OCI-LY7 (cell line): ENCODE measurements at regions of chr14 and their contacts with region 1.

Region 1: DNA sequence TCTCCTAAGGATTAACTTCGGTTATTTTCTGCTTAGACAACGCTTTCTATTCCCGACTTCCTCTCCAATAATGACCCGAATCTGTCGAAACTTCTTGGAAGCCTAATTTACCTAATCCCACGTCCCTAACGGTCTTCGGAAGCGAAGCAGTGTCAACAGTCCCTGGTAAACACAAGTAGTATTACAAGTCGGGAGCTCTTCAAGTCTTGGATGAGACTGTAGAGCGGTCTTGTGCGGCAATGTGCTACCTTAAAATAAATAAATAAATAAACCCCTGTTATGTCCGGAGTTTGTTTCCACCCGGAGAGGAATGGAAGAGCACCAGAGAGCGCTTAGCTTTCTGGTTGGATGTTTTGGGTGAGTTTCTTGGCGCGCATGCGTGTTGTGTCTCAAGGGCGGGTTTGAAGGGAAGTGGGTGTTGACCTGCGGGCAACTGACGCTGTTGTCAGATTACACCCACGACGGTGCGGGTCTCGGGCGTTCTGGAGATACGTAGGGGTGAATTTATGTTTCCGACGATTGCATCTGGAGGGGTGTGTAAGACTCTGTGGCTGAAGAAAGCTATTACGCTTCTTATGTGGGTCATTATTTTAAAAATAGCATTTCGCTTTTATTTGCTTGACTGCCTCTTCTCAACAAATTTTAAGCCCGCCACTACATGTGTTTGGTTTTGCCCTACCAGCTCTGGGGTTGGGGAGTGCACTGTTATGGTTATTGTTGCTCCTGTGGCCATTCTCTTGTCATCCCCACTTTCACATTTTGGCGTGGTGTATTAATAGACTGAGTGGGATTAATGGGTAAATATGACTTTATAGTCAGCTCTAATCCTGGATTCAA is at the starts of genes KIAA0586 and TIMM9:
- DNase-seq: peak; percentile 99
- H3K4me3 ChIP-seq: peak within 1 kb of the TSS; percentile 95
- H3K27ac ChIP-seq: peak within 1 kb of the TSS; percentile 94
- H3K4me1 ChIP-seq: peaks cover 33% of the 10 kb centered on the region
- CTCF ChIP-seq: no peak
- total RNA-seq, gene KIAA0586: 20.5 and 20.8 TPM in 2 replicates
- total RNA-seq, gene TIMM9: 33.0 and 37.2 TPM in 2 replicates

Region 2: GRCh38 chr14:58199726-58200479 is 227.6 kb before region 1 on chr14 and contains the start of gene ACTR10:
- CTCF ChIA-PET with region 1: no interaction called
- POLR2A ChIA-PET with region 1: interaction called, 13 read pairs
- intact Hi-C with region 1: no loop called
- DNase-seq: peak; percentile 91
- H3K4me3 ChIP-seq: peak within 1 kb of the TSS; percentile 95
- H3K27ac ChIP-seq: peak within 1 kb of the TSS; percentile 59
- H3K4me1 ChIP-seq: peaks cover 18% of the 10 kb centered on the region
- CTCF ChIP-seq: no peak
- total RNA-seq, gene ACTR10: 34.3 and 42.5 TPM in 2 replicates

Region 3: GRCh38 chr14:58244556-58245387 is 182.7 kb before region 1 on chr14 and contains the start of gene PSMA3:
- CTCF ChIA-PET with region 1: no interaction called
- POLR2A ChIA-PET with region 1: no interaction called
- intact Hi-C with region 1: loop called (anchors 5 kb)
- DNase-seq: peak; percentile 97
- H3K4me3 ChIP-seq: peak within 1 kb of the TSS; percentile 92
- H3K27ac ChIP-seq: peak within 1 kb of the TSS; percentile 88
- H3K4me1 ChIP-seq: peaks cover 33% of the 10 kb centered on the region
- CTCF ChIP-seq: no peak
- total RNA-seq, gene PSMA3: 88.9 and 89.1 TPM in 2 replicates

Region 4: GRCh38 chr14:58297762-58298476 is 129.6 kb before region 1 on chr14:
- CTCF ChIA-PET with region 1: no interaction called
- POLR2A ChIA-PET with region 1: interaction called, 8 read pairs
- intact Hi-C with region 1: loop called (anchors 1 kb)
- DNase-seq: peak; percentile 99
- H3K4me3 ChIP-seq: peak overlapping the region; percentile 99
- H3K27ac ChIP-seq: peak overlapping the region; percentile 92
- H3K4me1 ChIP-seq: peaks cover 24% of the 10 kb centered on the region
- CTCF ChIP-seq: peak; percentile 41; the same call in 1 of the 2 replicates

Region 5: DNA sequence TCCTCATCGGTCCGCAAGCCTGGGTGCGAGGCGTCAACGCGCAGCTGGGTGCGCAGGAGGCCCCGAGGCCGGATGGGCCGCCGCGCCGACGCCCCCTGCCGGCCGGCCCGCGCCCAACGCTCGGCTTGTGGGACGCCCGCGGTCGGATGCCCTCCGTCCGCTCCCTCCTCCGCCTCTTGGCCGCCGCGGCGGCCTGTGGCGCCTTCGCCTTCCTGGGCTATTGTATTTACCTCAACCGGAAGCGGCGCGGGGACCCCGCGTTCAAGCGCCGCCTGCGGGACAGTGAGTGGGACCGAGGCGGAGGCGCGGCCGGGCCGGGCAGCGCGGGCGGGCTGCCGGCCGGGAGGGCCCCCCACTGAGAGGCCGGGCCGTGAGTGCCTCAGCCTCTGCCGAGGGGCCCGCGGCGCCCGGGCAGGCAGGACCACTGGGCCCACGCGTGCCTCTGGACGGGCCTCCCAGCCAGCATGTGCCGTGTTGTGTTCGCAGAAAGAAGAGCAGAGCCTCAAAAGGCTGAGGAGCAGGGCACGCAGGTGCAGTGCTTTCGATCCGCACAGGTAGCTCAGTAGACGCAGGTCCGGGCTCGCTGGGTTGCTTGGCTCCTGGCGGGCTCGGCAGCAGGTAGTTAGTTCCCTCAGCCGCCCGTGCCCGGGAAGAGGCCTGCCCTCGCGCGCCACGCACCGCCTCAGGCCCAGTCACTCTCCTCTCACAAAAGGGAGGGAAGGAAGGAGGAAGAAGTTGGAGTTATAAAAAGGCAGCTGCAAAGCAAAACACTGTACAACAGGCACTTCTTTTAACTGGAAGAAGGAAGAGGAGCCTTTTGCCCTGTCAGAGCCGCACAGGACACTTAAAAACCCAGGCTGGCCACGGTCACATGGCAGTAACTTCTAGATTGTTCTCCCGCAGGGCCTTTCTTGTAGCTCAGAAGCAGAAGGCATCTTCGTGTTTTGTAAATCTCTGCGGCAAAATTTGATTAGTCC is 31.4 kb before region 1 on chr14 and contains the start of gene TOMM20L:
- CTCF ChIA-PET with region 1: no interaction called
- POLR2A ChIA-PET with region 1: interaction called, 10 read pairs
- intact Hi-C with region 1: no loop called
- DNase-seq: peak; percentile 70
- H3K4me3 ChIP-seq: peak within 1 kb of the TSS; percentile 13
- H3K27ac ChIP-seq: no peak within 1 kb of the TSS
- H3K4me1 ChIP-seq: peaks cover 7% of the 10 kb centered on the region
- CTCF ChIP-seq: peak; percentile 78
- total RNA-seq, gene TOMM20L: not detected in 2 replicates

Region 6: GRCh38 chr14:58597041-58597440 is 169.5 kb after region 1 on chr14:
- CTCF ChIA-PET with region 1: no interaction called
- POLR2A ChIA-PET with region 1: no interaction called
- intact Hi-C with region 1: no loop called
- DNase-seq: no peak
- H3K4me3 ChIP-seq: no peak overlapping the region
- H3K27ac ChIP-seq: no peak overlapping the region
- H3K4me1 ChIP-seq: no peaks in the 10 kb centered on the region
- CTCF ChIP-seq: no peak